Cardiac septum (tissue), 1 donor: ENCODE measurements at regions of chr22 and their contacts with region 1.

Region 1: GRCh38 chr22:42820066-42820763 is 36.9 kb downstream of the ARFGAP3 start:
- DNase-seq: no peak

Region 2: DNA sequence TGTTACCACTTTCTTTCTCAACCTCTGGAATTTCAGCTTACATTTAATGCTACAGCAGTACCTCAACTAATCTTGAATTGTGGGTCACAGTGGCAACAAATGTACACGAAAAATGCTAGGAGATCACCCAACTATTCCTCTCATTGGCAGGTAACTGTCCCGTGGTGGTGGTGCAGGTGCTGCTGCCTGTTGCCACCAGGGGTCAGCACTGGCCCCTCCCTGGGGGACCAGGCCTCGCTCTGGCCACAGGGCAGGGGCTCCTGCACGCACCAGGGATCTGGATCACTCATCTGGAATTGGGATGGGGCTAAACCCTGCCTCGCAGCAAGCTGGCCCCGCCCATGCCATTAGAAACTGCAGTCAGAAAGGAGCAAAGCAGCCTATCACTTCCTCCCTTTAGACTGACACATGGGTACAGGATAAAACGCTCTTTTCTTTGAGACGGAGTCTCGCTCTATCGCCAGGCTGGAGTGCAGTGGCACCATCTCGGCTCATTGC is 198.7 kb before region 1 on chr22:
- intact Hi-C with region 1: loop called (anchors 2 kb)
- DNase-seq: no peak

Region 3: DNA sequence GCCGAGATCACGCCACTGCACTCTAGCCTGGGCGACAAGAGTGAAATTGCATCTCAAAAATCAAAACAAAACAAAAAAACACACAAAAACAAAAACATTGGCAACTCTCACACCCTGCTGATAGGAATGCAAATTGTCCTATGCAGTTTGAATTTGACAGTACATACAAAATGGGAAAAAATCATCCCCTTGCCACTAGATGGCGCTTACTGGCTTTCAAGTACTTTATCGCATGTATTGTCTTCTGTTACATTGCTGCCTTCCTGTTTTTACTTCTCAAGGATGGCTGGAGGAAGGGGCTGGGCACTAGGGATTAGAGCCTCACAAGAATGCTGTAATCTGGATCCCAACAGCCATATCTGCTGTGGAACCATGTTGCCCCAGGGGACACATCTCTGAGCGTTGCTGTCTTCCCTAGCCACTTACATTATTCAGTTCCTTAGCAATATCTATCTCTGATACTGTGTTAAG is 40.1 kb before region 1 on chr22:
- intact Hi-C with region 1: loop called (anchors 5 kb)
- DNase-seq: no peak